ENCODE measurements at regions of chr11 and their contacts with region 1.

Region 1: DNA sequence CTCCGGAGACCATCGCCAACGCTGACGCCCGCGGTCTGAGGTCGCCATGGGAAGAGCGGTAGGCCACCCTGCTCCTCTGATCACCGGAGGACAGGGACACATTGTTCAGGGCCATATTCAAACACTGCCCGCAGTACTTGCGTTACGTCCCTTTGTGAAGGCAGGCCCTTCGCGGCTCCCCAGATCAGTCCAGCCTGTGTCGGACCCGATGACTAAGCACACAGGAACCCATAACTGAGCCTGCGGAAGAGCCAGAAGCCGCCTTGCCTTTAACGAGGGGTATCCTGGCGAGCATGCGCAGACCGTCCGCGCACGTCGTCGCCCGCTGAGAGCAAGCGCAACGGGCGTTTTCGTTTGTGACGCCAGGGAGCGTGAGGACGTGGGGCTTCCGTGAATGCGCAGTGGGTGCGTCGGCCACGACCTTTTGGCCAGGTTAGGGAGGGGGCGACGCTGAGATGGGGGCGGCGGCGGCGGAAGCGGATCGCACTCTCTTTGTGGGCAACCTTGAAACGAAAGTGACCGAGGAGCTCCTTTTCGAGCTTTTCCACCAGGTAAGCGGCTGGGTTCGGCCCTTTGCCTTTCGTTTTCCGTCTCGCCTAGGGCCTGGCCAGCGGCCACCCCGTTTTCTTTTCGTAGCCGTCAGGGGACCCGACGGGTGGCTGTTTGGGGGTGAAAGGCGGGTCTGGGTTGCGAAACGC is at the starts of genes C11orf71 and RBM7:
- DNase-seq: peak; percentile 92 to 99
- H3K4me3 ChIP-seq: peak within 1 kb of the TSS; percentile 59 to 81
- H3K27ac ChIP-seq: peak within 1 kb of the TSS; percentile 96 to 98
- H3K4me1 ChIP-seq: peaks cover 0 to 29% of the 10 kb centered on the region in 2 donors
- H3K27me3 ChIP-seq: no peaks in the 10 kb centered on the region
- CTCF ChIP-seq: no peak
- total RNA-seq, gene C11orf71: 0.43 TPM
- total RNA-seq, gene RBM7: 3.2 TPM

Region 2: GRCh38 chr11:114295676-114296604 is 104.4 kb before region 1 on chr11 and contains the start of gene NNMT:
- intact Hi-C with region 1: loop called (anchors 5 kb)
- DNase-seq: peak in 1 of 2 donors; percentile 93
- H3K4me3 ChIP-seq: peak within 1 kb of the TSS; percentile 47 to 76
- H3K27ac ChIP-seq: peak within 1 kb of the TSS; percentile 97 to 99
- H3K4me1 ChIP-seq: peaks cover 3 to 33% of the 10 kb centered on the region in 2 donors
- H3K27me3 ChIP-seq: no peaks in the 10 kb centered on the region
- CTCF ChIP-seq: no peak
- total RNA-seq, gene NNMT: 1,040 TPM

Region 3: DNA sequence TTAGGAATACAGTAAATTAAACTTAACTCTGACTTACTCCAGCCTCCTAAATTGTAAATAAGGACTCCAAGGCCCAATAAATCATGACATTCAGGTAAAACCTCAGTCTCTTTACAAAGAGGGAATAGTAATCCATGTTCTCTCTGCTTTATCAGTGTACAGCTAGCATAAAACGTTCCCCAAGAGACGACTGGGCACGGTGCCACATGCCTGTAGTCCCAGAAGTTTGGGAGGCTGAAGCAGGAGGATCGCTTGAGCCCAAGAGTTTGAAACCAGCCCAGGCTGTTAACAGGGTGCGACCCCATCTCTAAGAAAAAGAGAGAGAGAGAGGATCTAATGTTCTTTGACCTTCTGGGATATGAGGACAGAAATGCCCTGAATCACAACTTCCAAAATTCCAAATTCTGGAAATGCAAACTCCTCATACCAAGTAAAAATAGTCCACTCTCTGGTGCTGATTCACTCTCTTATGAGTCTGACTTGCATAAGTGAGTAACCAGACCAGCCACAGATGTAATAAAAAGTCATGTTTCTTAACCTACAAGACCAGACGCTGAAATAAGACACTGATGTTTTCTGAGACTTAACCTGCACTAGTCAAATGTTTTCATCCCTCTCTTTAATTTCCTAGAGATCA is 78.6 kb before region 1 on chr11:
- intact Hi-C with region 1: loop called (anchors 2 kb)
- DNase-seq: peak in 1 of 2 donors; percentile 84
- H3K4me3 ChIP-seq: no peak overlapping the region
- H3K27ac ChIP-seq: peak overlapping the region; percentile 65 to 69
- H3K4me1 ChIP-seq: peaks cover 16 to 32% of the 10 kb centered on the region in 2 donors
- H3K27me3 ChIP-seq: no peaks in the 10 kb centered on the region
- CTCF ChIP-seq: no peak

Region 4: GRCh38 chr11:114340311-114341131 is 59.8 kb before region 1 on chr11:
- intact Hi-C with region 1: loop called (anchors 5 kb)
- DNase-seq: peak in 1 of 2 donors; percentile 79
- H3K4me3 ChIP-seq: peak overlapping the region; percentile 31 to 53
- H3K27ac ChIP-seq: peak overlapping the region; percentile 27 to 53
- H3K4me1 ChIP-seq: peaks cover 0 to 5% of the 10 kb centered on the region in 2 donors
- H3K27me3 ChIP-seq: no peaks in the 10 kb centered on the region
- CTCF ChIP-seq: peak; percentile 72 to 83 (median 78)

Region 5: GRCh38 chr11:114354076-114354475 is 46.3 kb before region 1 on chr11:
- intact Hi-C with region 1: no loop called
- DNase-seq: no peak
- H3K4me3 ChIP-seq: no peak overlapping the region
- H3K27ac ChIP-seq: no peak overlapping the region
- H3K4me1 ChIP-seq: no peaks in the 10 kb centered on the region
- H3K27me3 ChIP-seq: no peaks in the 10 kb centered on the region
- CTCF ChIP-seq: no peak

Region 6: GRCh38 chr11:114366331-114367243 is 33.8 kb before region 1 on chr11:
- intact Hi-C with region 1: loop called (anchors 2 kb)
- DNase-seq: peak in 1 of 2 donors; percentile 69
- H3K4me3 ChIP-seq: peak overlapping the region in 1 of 2 donors; percentile 3
- H3K27ac ChIP-seq: peak overlapping the region; percentile 17 to 55
- H3K4me1 ChIP-seq: peaks cover 0 to 12% of the 10 kb centered on the region in 2 donors
- H3K27me3 ChIP-seq: no peaks in the 10 kb centered on the region
- CTCF ChIP-seq: no peak

Region 7: DNA sequence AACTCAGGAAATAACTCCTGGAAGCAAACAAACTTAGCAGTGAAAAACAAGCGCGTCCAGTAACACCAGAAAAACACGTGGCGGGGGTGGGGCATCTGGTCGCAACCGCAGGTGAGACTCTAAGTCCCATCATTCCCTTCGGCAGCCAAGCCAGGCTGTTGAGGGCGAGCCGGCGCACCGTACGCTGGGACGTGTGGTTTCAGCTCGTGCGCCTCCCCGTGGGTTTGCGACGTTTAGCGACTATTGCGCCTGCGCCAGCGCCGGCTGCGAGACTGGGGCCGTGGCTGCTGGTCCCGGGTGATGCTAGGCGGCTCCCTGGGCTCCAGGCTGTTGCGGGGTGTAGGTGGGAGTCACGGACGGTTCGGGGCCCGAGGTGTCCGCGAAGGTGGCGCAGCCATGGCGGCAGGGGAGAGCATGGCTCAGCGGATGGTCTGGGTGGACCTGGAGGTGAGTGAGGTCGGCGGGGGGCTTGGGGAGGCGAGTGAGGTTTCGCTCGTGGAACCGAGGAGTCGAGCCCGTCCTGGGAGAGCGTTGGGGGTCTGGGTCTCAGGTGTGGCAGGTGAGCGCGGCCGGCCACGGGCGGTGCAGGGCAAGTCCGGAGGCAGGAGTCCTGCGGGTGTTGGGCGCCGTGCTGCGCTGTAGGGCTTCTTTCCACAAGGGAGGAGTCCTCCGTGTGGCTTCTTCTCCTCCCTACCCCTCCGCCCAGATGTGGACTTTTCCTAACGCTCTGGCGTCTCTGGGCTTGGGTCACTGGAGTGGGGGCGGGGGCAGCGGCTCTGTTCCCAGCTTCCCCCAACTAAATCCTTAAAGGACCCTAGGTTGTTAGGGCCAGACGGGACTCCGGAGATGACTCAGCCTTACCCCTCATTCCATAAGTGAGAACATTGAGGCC is 39.1 kb after region 1 on chr11 and contains the start of gene REXO2:
- intact Hi-C with region 1: loop called (anchors 1 kb)
- DNase-seq: peak; percentile 82 to 97
- H3K4me3 ChIP-seq: peak within 1 kb of the TSS; percentile 81 to 98
- H3K27ac ChIP-seq: peak within 1 kb of the TSS; percentile 78 to 91
- H3K4me1 ChIP-seq: peaks cover 0 to 17% of the 10 kb centered on the region in 2 donors
- H3K27me3 ChIP-seq: no peaks in the 10 kb centered on the region
- CTCF ChIP-seq: peak; percentile 2 to 45 (median 34)
- total RNA-seq, gene REXO2: 134 TPM

Measured in ascending aorta (tissue), 2 donors.